ENCODE measurements at regions of chr10 and their contacts with region 1.

Region 1: DNA sequence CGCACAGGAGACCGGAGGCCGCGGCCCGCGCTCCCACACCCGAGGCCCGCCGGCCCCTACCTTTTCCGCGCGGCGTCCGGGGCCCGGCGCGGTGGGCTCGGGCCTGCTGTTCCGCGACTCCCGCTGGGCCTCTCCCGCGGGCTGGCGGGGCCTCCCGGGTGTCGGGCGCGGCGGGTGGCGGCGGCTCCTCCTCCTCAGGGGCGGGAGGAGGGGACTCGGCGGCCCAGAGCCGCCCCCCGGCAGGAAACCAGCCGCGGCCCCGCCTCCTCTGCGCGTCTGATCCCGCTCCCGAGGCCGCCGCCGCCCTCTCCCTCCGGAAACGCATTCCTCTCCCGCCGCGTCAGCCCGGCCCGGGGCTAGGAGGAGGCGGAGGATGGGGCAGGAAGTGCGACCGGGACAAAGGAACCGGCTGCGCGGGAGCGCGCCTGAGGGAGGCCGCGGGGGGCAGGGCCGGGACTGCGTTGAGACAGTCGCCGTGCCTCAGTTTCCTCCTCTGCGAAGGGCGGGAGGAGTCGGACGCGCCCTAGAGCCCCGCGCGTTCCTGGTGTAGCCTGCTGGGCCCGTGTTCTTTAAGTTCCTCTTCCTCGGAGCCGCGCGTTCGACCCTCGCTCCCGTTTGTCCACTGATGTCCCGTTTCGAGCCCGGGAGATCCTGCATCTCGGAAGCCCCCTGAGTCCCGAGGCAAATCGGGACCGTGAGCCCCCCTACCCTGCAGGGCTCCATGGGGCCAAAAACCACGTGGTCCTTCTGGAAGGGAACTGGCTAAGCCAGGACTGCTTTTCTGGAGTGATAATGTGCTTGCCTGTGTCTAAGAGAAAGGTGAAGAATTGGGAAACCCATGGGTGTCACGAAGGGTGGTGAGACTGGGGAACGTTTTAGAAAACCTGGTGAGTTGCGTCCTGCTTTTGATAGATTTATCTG is at the start of gene ITGB1:
- DNase-seq: peak; percentile 83 to 85 (median 85)
- H3K4me3 ChIP-seq: peak within 1 kb of the TSS; percentile 76 to 88
- H3K4me3 Mint-ChIP-seq: peak within 1 kb of the TSS; percentile 87 to 96 (median 92)
- H3K27ac ChIP-seq: peak within 1 kb of the TSS; percentile 69
- H3K27ac Mint-ChIP-seq: peak within 1 kb of the TSS; percentile 90 to 96 (median 94)
- H3K4me1 ChIP-seq: peaks cover 35% of the 10 kb centered on the region
- H3K4me1 Mint-ChIP-seq: peaks cover 41 to 61% (median 48%) of the 10 kb centered on the region in 4 donors
- H3K27me3 ChIP-seq: no peaks in the 10 kb centered on the region
- H3K27me3 Mint-ChIP-seq: no peaks in the 10 kb centered on the region
- total RNA-seq, gene ITGB1: 420 to 435 TPM

Region 2: DNA sequence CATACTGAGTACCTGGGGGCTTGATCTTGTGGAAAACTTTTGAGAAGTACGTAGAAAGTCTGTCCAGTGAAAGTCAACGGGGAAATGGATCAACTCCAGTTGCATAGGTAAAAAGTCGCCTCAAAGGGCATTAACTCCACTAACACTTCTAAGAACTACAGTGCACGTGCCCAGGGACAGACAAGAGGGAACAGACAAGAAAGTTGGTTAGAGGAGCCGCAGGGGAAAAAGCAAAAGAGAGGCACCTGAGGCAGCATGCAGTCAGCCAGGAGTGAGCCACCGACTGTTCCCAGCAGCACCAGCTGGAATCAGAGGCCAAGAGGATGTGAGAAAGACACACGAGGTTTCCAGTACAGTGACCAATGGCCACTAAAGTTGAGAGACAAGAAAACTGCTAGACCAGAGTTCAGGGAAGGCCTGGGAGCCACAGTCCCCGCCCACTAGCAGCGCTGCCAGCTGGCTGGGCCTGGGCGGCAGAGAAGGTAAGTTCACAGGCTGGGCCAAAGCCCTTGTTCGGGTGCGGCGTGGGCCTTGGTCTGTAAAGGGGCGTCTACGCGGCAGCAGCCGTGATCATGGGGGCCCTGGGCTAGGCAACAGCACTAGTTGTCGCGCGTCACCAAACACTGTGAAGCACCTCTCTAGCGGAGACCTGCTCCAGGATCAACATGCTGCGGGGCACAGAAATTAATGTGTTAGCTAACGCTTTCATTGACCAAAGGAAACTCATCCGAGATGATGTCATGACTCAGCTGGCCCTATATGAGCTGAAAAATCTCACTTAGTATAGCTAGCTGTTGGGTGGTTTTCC is 14.3 kb before region 1 on chr10:
- CTCF ChIA-PET with region 1: interaction called, 5 read pairs
- POLR2A ChIA-PET with region 1: interaction called, 18 read pairs
- intact Hi-C with region 1: loop called (anchors 1 kb)
- DNase-seq: no peak
- H3K4me3 ChIP-seq: no peak overlapping the region
- H3K4me3 Mint-ChIP-seq: peak overlapping the region; percentile 43 to 82 (median 72)
- H3K27ac ChIP-seq: no peak overlapping the region
- H3K27ac Mint-ChIP-seq: peak overlapping the region in 6 of 7 donors; percentile 53 to 92 (median 76)
- H3K4me1 ChIP-seq: peaks cover 98% of the 10 kb centered on the region
- H3K4me1 Mint-ChIP-seq: peaks cover 65 to 91% (median 81%) of the 10 kb centered on the region in 4 donors
- H3K27me3 ChIP-seq: no peaks in the 10 kb centered on the region
- H3K27me3 Mint-ChIP-seq: no peaks in the 10 kb centered on the region

Region 3: DNA sequence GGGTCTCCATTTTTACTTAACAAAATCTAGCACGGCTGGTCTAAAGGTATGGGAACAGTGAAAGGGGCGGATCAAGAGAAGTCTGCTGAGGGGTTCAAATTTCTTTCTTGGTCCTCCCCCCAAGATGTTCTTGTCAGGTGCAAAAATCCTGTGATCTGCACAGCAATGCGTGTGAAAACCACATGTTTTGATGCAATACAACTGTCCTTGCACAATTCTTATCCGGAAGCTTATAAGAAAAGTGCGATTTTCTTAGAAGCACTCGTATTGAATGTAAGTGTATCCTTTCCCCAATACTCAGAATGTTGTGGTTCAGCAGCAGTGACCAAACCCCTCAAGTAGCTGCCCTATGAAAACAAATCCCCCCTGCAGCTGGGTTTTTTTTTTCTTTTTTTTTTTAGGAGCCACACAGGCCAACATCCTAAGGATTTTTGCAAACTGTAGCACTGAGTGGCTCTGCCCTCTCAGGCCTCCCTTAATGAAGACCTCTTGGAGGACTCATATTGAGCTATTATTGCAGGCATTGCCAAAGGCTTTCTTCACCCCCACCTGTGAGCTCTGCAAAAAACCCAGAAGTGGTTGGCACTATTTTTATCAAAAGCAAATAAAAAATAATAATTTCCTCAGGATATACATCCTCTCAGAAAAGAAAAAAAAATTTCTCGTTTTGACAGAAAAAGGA is 151.6 kb after region 1 on chr10:
- CTCF ChIA-PET with region 1: no interaction called
- POLR2A ChIA-PET with region 1: interaction called, 56 read pairs
- intact Hi-C with region 1: loop called (anchors 2 kb)
- DNase-seq: peak; percentile 52 to 59 (median 53)
- H3K4me3 ChIP-seq: peak overlapping the region in 1 of 2 donors; percentile 25
- H3K4me3 Mint-ChIP-seq: peak overlapping the region; percentile 60 to 86 (median 77)
- H3K27ac ChIP-seq: peak overlapping the region; percentile 57
- H3K27ac Mint-ChIP-seq: peak overlapping the region; percentile 91 to 98 (median 98)
- H3K4me1 ChIP-seq: peaks cover 98% of the 10 kb centered on the region
- H3K4me1 Mint-ChIP-seq: peaks cover 67 to 99% (median 83%) of the 10 kb centered on the region in 4 donors
- H3K27me3 ChIP-seq: no peaks in the 10 kb centered on the region
- H3K27me3 Mint-ChIP-seq: no peaks in the 10 kb centered on the region

Region 4: DNA sequence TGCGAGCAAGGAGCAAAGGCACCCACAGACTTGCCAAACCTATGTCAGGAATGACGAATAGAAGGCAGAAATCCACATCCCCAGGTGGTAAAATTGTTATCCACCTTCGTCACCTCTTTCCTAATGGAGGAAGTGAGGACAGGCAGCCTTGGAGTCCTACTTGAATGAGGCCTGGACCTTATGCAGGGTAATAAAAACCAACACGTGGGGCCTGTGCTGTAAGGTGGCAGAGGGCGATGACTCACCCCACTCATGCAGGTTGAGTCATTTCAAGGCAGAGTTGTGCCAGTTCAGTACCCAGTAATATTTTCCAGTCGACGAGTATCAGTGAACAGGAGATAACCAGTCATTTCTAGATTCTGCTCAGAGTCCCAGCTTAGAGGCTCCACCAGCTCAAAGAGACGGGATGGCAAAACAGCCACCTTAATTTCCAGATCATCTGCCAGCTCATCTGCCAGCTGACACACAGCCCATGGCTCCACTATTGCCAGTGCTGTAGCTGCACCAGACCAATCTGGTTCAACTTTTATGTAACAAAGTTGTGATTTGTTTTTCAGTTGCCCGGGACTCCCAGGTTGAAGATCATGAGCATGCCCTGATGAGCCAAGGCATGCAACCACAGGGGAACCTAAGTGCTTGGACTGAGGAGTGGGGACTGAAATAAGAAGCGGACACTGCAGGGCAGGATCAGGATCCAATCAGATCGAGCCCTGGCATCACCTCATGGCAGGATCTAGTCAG is 175.8 kb after region 1 on chr10:
- CTCF ChIA-PET with region 1: interaction called, 3 read pairs
- POLR2A ChIA-PET with region 1: interaction called, 17 read pairs
- intact Hi-C with region 1: loop called (anchors 2 kb)
- DNase-seq: peak; percentile 59 to 96 (median 73)
- H3K4me3 ChIP-seq: no peak overlapping the region
- H3K4me3 Mint-ChIP-seq: peak overlapping the region; percentile 13 to 84 (median 62)
- H3K27ac ChIP-seq: peak overlapping the region; percentile 84
- H3K27ac Mint-ChIP-seq: peak overlapping the region; percentile 89 to 100 (median 100)
- H3K4me1 ChIP-seq: peaks cover 98% of the 10 kb centered on the region
- H3K4me1 Mint-ChIP-seq: peaks cover 71 to 97% (median 85%) of the 10 kb centered on the region in 4 donors
- H3K27me3 ChIP-seq: no peaks in the 10 kb centered on the region
- H3K27me3 Mint-ChIP-seq: no peaks in the 10 kb centered on the region